Activated CD4-positive, alpha-beta T cell treated with anti-CD3 and anti-CD28 coated beads for 36 hours (primary cell): ENCODE measurements at regions of chr18 and their contacts with region 1.

Region 1: DNA sequence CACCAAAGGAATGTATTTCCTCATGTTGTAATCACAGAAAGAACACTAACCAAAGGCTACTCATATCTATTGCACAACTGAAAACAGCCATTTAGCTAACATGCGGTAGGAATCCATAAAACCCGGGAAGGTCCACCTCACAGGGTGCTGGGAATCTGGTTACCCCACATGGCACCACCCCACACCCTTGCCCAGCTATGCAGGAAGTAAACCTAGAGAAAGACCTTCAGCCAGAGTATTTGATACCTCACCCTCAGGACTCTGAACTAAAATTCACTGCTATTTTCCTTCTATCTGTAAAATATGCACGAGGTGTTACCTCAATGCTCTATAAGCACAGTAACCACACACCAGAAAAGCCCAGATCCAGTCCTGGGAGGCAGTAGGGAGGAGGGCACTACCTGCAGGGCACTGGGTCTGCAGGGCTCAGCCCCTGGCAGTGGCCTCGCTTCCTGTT is 45.8 kb downstream of the PTPN2 start:
- DNase-seq: peak; percentile 16
- ATAC-seq: no peak
- H3K4me3 Mint-ChIP-seq: peak overlapping the region; percentile 56
- H3K27ac Mint-ChIP-seq: peak overlapping the region; percentile 92
- H3K4me1 Mint-ChIP-seq: peaks cover 64% of the 10 kb centered on the region
- H3K27me3 Mint-ChIP-seq: no peaks in the 10 kb centered on the region

Region 2: DNA sequence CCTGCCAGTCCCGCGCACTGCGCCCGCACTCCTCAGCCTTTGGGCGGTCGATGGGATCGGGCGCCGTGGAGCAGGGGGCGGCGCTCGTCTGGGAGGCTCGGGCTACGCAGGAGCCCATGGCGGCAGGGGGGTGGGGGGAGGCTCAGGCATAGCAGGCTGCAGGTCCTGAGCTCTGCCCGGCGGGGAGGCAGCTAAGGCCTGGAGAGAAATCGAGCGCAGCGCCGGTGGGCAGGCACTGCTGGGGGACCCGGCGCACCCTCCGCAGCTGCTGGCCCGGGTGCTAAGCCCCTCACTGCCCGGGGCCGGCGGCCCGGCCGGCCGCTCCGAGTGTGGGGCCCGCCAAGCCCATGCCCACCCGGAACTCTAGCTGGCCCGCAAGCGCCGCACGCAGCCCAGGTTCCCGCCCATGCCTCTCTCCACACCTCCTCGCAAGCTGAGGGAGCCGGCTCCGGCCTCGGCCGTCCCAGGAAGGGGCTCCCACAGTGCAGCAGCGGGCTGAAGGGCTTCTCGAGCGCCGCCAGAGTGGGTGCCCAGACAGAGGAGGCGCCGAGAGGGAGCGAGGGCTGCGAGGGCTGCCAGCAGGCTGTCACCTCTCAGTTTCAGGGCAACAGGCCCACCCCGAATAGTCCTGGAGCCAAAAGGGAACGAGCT is 61.3 kb before region 1 on chr18:
- CTCF ChIA-PET with region 1: no interaction called
- POLR2A ChIA-PET with region 1: no interaction called
- intact Hi-C with region 1: loop called in 1 of 2 experiments (anchors 1 kb)
- DNase-seq: no peak
- ATAC-seq: no peak
- H3K4me3 Mint-ChIP-seq: no peak overlapping the region
- H3K27ac Mint-ChIP-seq: no peak overlapping the region
- H3K4me1 Mint-ChIP-seq: peaks cover 16% of the 10 kb centered on the region
- H3K27me3 Mint-ChIP-seq: no peaks in the 10 kb centered on the region

Region 3: GRCh38 chr18:12857215-12857905 is 19.2 kb after region 1 on chr18:
- CTCF ChIA-PET with region 1: interaction called, 3 read pairs
- POLR2A ChIA-PET with region 1: interaction called, 4 read pairs
- intact Hi-C with region 1: loop called in 1 of 2 experiments (anchors 1 kb)
- DNase-seq: peak; percentile 66
- ATAC-seq: peak; percentile 82
- H3K4me3 Mint-ChIP-seq: peak overlapping the region; percentile 15
- H3K27ac Mint-ChIP-seq: peak overlapping the region; percentile 71
- H3K4me1 Mint-ChIP-seq: peaks cover 68% of the 10 kb centered on the region
- H3K27me3 Mint-ChIP-seq: no peaks in the 10 kb centered on the region

Region 4: DNA sequence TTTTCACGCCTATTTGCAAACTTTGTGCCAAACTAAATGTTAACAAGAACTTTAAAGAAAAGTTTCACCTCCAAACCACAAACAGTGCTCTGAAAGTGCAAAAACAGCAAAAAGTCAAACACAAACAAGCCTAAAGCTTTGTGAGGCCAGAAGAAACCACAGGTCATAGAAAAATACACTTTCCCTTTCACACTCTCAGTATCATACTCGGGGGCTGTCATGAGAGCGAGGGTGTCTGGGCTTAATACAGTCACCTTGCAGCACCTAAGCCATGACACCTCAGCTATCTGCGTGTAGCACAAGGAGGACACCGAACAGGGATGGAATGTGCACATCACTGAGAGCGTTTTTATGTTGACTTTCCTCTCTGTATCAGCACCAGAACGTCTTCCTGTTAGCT is 83.0 kb after region 1 on chr18:
- CTCF ChIA-PET with region 1: no interaction called
- POLR2A ChIA-PET with region 1: no interaction called
- intact Hi-C with region 1: no loop called
- DNase-seq: peak; percentile 42
- ATAC-seq: peak; percentile 95
- H3K4me3 Mint-ChIP-seq: no peak overlapping the region
- H3K27ac Mint-ChIP-seq: no peak overlapping the region
- H3K4me1 Mint-ChIP-seq: peaks cover 8% of the 10 kb centered on the region
- H3K27me3 Mint-ChIP-seq: no peaks in the 10 kb centered on the region

Region 5: DNA sequence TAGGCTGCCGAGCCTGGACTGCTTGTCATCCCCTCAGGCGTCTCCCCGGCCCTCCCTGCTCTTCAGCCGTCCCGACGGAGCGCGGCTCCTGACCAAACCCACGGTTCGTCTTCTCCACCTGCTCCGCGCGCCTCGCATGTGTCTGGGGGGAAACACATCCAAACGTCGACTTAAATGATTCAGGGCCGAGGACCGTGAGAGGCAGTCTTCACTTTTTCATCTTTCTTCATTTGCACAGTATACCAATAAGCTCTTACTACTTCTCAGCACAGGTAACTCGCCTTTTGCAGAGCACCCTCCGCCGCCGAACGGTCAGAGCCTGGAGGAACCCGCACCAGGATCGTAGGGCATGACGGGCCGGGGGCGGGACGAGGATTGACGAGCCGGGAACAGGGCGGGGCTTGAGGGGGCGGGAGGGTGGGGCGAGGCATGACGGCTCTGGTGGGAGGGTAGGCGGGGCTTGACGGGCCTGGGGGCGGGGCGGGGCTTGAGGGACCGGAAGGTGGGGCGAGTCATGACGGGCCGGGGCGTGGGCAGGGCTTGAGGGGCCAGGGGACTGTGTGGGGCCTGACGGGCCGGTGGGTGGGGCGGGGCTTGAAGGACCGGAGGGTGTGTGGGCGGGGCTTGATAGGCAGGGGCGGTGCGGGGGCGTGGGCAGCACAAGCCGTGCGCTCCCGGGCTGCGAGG is 109.3 kb after region 1 on chr18 and contains the start of gene SEH1L:
- CTCF ChIA-PET with region 1: no interaction called
- POLR2A ChIA-PET with region 1: interaction called, 3 read pairs
- intact Hi-C with region 1: loop called (anchors 1 kb)
- DNase-seq: peak; percentile 100
- ATAC-seq: peak; percentile 86
- H3K4me3 Mint-ChIP-seq: peak within 1 kb of the TSS; percentile 89
- H3K27ac Mint-ChIP-seq: peak within 1 kb of the TSS; percentile 97
- H3K4me1 Mint-ChIP-seq: peaks cover 34% of the 10 kb centered on the region
- H3K27me3 Mint-ChIP-seq: no peaks in the 10 kb centered on the region
- total RNA-seq, gene SEH1L: 100 to 107 TPM

Region 6: DNA sequence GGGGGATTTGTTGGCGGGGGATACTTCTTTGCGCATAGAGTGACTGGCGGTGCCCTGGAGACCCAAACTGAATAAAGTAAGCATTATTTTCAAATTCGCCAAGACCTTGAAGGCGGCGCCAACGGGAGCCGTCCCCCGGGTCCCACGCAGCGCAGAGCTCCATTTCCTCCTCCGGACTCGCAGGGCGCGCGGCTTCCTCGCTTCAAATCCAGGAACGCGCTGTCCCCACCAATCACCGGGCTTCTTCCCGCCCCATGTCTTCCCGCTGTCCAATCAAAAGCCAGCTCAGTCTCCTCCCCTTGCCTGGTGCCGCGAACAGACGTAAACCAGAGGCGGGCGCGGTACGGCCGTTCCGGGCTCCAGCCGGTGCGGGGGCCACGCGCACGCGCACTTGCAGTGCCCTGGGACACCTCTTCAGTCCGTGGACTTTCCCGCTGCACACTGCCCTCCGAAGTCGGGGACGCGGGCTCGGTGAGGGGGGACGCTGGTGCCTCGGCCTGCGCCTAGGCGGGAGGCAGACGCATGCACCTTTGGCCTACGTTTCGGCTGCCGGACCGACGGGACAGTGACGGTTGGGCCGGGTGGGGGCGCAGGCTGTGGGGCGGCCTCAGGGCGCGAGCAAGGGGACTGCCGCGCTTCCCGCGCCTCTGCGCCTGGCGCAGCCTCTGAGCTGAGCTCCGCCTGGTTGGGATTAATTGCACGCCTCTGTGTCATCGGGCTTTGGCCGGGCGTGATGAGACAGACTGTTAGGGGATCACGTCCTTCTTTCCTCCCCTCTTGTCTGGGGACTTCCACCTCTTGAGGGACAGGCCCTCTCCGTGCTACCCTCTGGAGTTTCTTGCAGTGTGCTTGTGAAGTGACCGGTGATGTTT is 153.0 kb after region 1 on chr18 and contains the start of gene CEP192:
- CTCF ChIA-PET with region 1: no interaction called
- POLR2A ChIA-PET with region 1: no interaction called
- intact Hi-C with region 1: loop called in 1 of 2 experiments (anchors 1 kb)
- DNase-seq: peak; percentile 98
- ATAC-seq: peak; percentile 90
- H3K4me3 Mint-ChIP-seq: peak within 1 kb of the TSS; percentile 87
- H3K27ac Mint-ChIP-seq: peak within 1 kb of the TSS; percentile 93
- H3K4me1 Mint-ChIP-seq: peaks cover 21% of the 10 kb centered on the region
- H3K27me3 Mint-ChIP-seq: no peaks in the 10 kb centered on the region
- total RNA-seq, gene CEP192: 36.0 to 39.3 TPM

Region 7: GRCh38 chr18:13381944-13382365 is 543.7 kb after region 1 on chr18:
- CTCF ChIA-PET with region 1: no interaction called
- POLR2A ChIA-PET with region 1: no interaction called
- intact Hi-C with region 1: loop called in 1 of 2 experiments (anchors 2 kb)
- DNase-seq: peak; percentile 59
- ATAC-seq: peak; percentile 26
- H3K4me3 Mint-ChIP-seq: peak overlapping the region; percentile 72
- H3K27ac Mint-ChIP-seq: peak overlapping the region; percentile 98
- H3K4me1 Mint-ChIP-seq: peaks cover 76% of the 10 kb centered on the region
- H3K27me3 Mint-ChIP-seq: no peaks in the 10 kb centered on the region

Region 8: DNA sequence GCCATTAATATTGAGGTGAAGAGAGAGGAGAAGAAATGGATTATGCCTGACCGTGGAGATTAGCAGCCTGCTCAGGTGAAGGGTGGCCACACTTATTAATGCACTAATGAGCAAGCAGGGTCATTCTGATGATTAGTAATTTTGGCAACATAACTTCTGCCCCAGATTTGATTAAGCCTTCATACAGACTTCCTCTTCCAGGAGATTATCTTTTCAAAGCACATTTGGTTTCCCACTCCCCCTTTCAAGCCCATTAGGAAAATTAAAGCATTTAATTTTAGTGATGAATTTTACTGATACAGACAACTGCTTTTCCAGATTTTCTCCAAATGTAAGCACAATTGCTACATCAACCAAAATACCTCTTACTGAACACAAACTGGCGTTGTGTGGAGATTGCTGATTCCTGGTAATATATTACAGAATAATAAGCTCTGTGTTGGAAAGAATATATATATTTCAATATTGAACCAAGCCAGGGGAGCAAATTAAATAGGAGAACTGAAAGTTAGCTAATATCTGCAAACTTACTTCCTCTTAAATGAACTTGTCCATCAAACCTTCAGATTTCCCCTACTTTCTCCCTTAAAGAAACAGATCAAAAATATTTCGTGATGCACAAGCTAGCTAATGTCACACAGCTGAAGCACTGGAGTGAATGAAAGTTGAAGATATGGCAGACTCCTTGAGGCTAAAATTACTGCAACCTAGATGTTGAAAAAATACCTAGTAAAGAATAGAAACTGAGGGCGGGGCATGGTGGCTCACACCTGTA is 747.4 kb after region 1 on chr18:
- CTCF ChIA-PET with region 1: no interaction called
- POLR2A ChIA-PET with region 1: no interaction called
- intact Hi-C with region 1: loop called in 1 of 2 experiments (anchors 5 kb)
- DNase-seq: no peak
- ATAC-seq: no peak
- H3K4me3 Mint-ChIP-seq: no peak overlapping the region
- H3K27ac Mint-ChIP-seq: peak overlapping the region; percentile 35
- H3K4me1 Mint-ChIP-seq: peaks cover 56% of the 10 kb centered on the region
- H3K27me3 Mint-ChIP-seq: no peaks in the 10 kb centered on the region